Activated CD8-positive, alpha-beta memory T cell treated with anti-CD3 and anti-CD28 coated beads, Interleukin-2, amount 10 ng/mL, durations not matched to agents 7 days and 5 days (primary cell): ENCODE measurements at regions of chr20 and their contacts with region 1.

Region 1: DNA sequence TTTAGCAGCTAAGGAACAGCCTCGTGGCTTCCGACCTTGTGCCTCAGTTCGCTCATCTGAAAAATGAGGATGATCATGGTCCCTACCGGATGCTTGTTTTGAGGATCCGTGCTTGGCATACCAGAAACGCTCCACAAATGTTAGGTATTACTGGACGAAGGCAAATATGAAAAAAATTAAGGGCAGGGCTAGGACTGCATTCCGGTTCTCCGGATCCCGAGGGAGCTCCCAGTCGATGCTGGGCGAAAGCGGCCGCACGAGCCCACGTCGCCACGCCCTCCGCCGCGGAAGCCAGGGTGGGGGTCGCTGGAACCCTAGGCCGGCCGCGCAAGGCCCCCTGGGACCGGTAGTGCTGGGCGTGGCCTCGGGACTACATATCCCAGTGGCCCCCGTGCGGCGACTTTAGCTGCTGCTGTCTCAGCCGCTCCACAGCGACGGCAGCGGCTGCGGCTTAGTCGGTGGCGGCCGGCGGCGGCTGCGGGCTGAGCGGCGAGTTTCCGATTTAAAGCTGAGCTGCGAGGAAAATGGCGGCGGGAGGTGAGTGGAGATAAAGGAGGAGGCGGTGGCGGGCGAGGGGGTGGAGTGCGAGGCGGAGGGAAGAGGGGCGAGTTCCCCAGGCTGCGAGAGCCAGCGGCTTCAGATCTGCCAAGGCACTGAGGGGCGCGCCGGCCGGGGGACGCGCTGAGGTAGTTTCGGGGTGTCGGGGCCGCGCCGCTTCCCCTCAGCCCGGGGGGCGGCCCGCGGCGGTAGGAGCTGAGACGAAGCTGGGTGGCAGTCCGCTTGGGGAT is at the start of gene NCOA3:
- DNase-seq: peak; percentile 97
- ATAC-seq: peak; percentile 83
- H3K4me3 Mint-ChIP-seq: peak within 1 kb of the TSS; percentile 96
- H3K27ac Mint-ChIP-seq: peak within 1 kb of the TSS; percentile 91
- H3K4me1 Mint-ChIP-seq: peaks cover 57% of the 10 kb centered on the region
- H3K27me3 Mint-ChIP-seq: peaks cover 2% of the 10 kb centered on the region
- total RNA-seq, gene NCOA3: 74.9 to 75.8 TPM

Region 2: GRCh38 chr20:47487175-47487917 is 14.3 kb before region 1 on chr20:
- CTCF ChIA-PET with region 1: interaction called, 38 read pairs
- DNase-seq: peak; percentile 83
- ATAC-seq: peak; percentile 87
- H3K4me3 Mint-ChIP-seq: peak overlapping the region; percentile 54
- H3K27ac Mint-ChIP-seq: peak overlapping the region; percentile 98
- H3K4me1 Mint-ChIP-seq: peaks cover 68% of the 10 kb centered on the region
- H3K27me3 Mint-ChIP-seq: no peaks in the 10 kb centered on the region

Region 3: GRCh38 chr20:47620808-47621805 is 119.4 kb after region 1 on chr20:
- CTCF ChIA-PET with region 1: interaction called, 15 read pairs
- DNase-seq: no peak
- ATAC-seq: peak; percentile 49
- H3K4me3 Mint-ChIP-seq: no peak overlapping the region
- H3K27ac Mint-ChIP-seq: peak overlapping the region; percentile 9
- H3K4me1 Mint-ChIP-seq: peaks cover 46% of the 10 kb centered on the region
- H3K27me3 Mint-ChIP-seq: no peaks in the 10 kb centered on the region